Endothelial cell of umbilical vein (primary cell): ENCODE measurements at regions of chr9 and their contacts with region 1.

Region 1: GRCh38 chr9:20426019-20426418 is 196.3 kb downstream of the MLLT3 start:
- DNase-seq: no peak
- H3K4me3 ChIP-seq: no peak overlapping the region
- H3K27ac ChIP-seq: no peak overlapping the region
- H3K4me1 ChIP-seq: no peaks in the 10 kb centered on the region
- H3K27me3 ChIP-seq: no peaks in the 10 kb centered on the region
- CTCF ChIP-seq: no peak
- POLR2A ChIP-seq: no peak

Region 2: GRCh38 chr9:20447291-20447690 is 21.3 kb after region 1 on chr9:
- CTCF ChIA-PET with region 1: no interaction called
- POLR2A ChIA-PET with region 1: no interaction called
- dilution Hi-C with region 1: no loop called
- intact Hi-C with region 1: loop called (anchors 2 kb)
- DNase-seq: no peak
- H3K4me3 ChIP-seq: no peak overlapping the region
- H3K27ac ChIP-seq: no peak overlapping the region
- H3K4me1 ChIP-seq: no peaks in the 10 kb centered on the region
- H3K27me3 ChIP-seq: no peaks in the 10 kb centered on the region
- CTCF ChIP-seq: no peak
- POLR2A ChIP-seq: no peak